Activated T-helper 1 cell treated with anti-CD3 and anti-CD28 coated beads, Interleukin-12 subunit alpha, Interleukin-12 subunit beta, Interleukin-2, Interleukin-4 antibody, amounts not matched to agents 30 ng/mL and 10 ng/mL and 1 ng/mL, durations not matched to agents 14 hours and 24 hours and 36 hours (primary cell): ENCODE measurements at regions of chr13 and their contacts with region 1.

Region 1: GRCh38 chr13:99269627-99270241 is 11.6 kb upstream of the GPR18 start:
- DNase-seq: no peak
- H3K4me3 Mint-ChIP-seq: no peak overlapping the region
- H3K27ac Mint-ChIP-seq: no peak overlapping the region
- H3K4me1 Mint-ChIP-seq: peaks cover 55% of the 10 kb centered on the region
- H3K27me3 Mint-ChIP-seq: no peaks in the 10 kb centered on the region

Region 2: GRCh38 chr13:99176309-99177276 is 93.1 kb before region 1 on chr13:
- intact Hi-C with region 1: loop called (anchors 1 kb)
- DNase-seq: peak; percentile 59
- H3K4me3 Mint-ChIP-seq: peak overlapping the region; percentile 40
- H3K27ac Mint-ChIP-seq: no peak overlapping the region
- H3K4me1 Mint-ChIP-seq: peaks cover 24% of the 10 kb centered on the region
- H3K27me3 Mint-ChIP-seq: peaks cover 17% of the 10 kb centered on the region

Region 3: GRCh38 chr13:99464441-99464949 is 194.8 kb after region 1 on chr13:
- intact Hi-C with region 1: no loop called
- DNase-seq: no peak
- H3K4me3 Mint-ChIP-seq: peak overlapping the region; percentile 43
- H3K27ac Mint-ChIP-seq: peak overlapping the region; percentile 87
- H3K4me1 Mint-ChIP-seq: peaks cover 33% of the 10 kb centered on the region
- H3K27me3 Mint-ChIP-seq: peaks cover 3% of the 10 kb centered on the region

Region 4: GRCh38 chr13:101144808-101145419 is 1875.2 kb after region 1 on chr13:
- intact Hi-C with region 1: no loop called
- DNase-seq: no peak
- H3K4me3 Mint-ChIP-seq: no peak overlapping the region
- H3K27ac Mint-ChIP-seq: no peak overlapping the region
- H3K4me1 Mint-ChIP-seq: no peaks in the 10 kb centered on the region
- H3K27me3 Mint-ChIP-seq: peaks cover 8% of the 10 kb centered on the region